Naive thymus-derived CD4-positive, alpha-beta T cell (primary cell): ENCODE measurements at regions of chr5 and their contacts with region 1.

Region 1: GRCh38 chr5:61331407-61332357 is at the start of gene ZSWIM6:
- DNase-seq: peak; percentile 96 to 99 (median 97)
- ATAC-seq: peak; percentile 90
- H3K4me3 ChIP-seq: peak within 1 kb of the TSS; percentile 86
- H3K4me3 Mint-ChIP-seq: peak within 1 kb of the TSS; percentile 87 to 98 (median 94)
- H3K27ac ChIP-seq: peak within 1 kb of the TSS; percentile 91
- H3K27ac Mint-ChIP-seq: peak within 1 kb of the TSS; percentile 81 to 98 (median 95)
- H3K4me1 ChIP-seq: peaks cover 15 to 29% of the 10 kb centered on the region in 2 donors
- H3K4me1 Mint-ChIP-seq: peaks cover 22 to 44% (median 31%) of the 10 kb centered on the region in 7 donors
- H3K27me3 ChIP-seq: no peaks in the 10 kb centered on the region
- H3K27me3 Mint-ChIP-seq: peaks cover 7 to 52% (median 19%) of the 10 kb centered on the region in 5 donors
- total RNA-seq, gene ZSWIM6: 4.2 to 18.5 (median 11.5) TPM

Region 2: GRCh38 chr5:61055434-61056006 is 276.2 kb before region 1 on chr5:
- CTCF ChIA-PET with region 1: no interaction called
- POLR2A ChIA-PET with region 1: no interaction called
- intact Hi-C with region 1: loop called in 1 of 2 experiments (anchors 1 kb)
- DNase-seq: peak in 5 of 9 donors; percentile 13 to 46 (median 30)
- ATAC-seq: peak; percentile 51
- H3K4me3 ChIP-seq: no peak overlapping the region
- H3K4me3 Mint-ChIP-seq: no peak overlapping the region
- H3K27ac ChIP-seq: no peak overlapping the region
- H3K27ac Mint-ChIP-seq: no peak overlapping the region
- H3K4me1 ChIP-seq: no peaks in the 10 kb centered on the region
- H3K4me1 Mint-ChIP-seq: peaks cover 0 to 3% (median 0%) of the 10 kb centered on the region in 7 donors
- H3K27me3 ChIP-seq: no peaks in the 10 kb centered on the region
- H3K27me3 Mint-ChIP-seq: no peaks in the 10 kb centered on the region

Region 3: GRCh38 chr5:61285531-61285930 is 46.2 kb before region 1 on chr5:
- CTCF ChIA-PET with region 1: no interaction called
- POLR2A ChIA-PET with region 1: interaction called, 5 read pairs
- intact Hi-C with region 1: loop called in 1 of 2 experiments (anchors 2 kb)
- DNase-seq: no peak
- ATAC-seq: no peak
- H3K4me3 ChIP-seq: no peak overlapping the region
- H3K4me3 Mint-ChIP-seq: no peak overlapping the region
- H3K27ac ChIP-seq: no peak overlapping the region
- H3K27ac Mint-ChIP-seq: peak overlapping the region in 1 of 9 donors; percentile 25
- H3K4me1 ChIP-seq: no peaks in the 10 kb centered on the region
- H3K4me1 Mint-ChIP-seq: peaks cover 0 to 8% (median 0%) of the 10 kb centered on the region in 7 donors
- H3K27me3 ChIP-seq: no peaks in the 10 kb centered on the region
- H3K27me3 Mint-ChIP-seq: no peaks in the 10 kb centered on the region

Region 4: DNA sequence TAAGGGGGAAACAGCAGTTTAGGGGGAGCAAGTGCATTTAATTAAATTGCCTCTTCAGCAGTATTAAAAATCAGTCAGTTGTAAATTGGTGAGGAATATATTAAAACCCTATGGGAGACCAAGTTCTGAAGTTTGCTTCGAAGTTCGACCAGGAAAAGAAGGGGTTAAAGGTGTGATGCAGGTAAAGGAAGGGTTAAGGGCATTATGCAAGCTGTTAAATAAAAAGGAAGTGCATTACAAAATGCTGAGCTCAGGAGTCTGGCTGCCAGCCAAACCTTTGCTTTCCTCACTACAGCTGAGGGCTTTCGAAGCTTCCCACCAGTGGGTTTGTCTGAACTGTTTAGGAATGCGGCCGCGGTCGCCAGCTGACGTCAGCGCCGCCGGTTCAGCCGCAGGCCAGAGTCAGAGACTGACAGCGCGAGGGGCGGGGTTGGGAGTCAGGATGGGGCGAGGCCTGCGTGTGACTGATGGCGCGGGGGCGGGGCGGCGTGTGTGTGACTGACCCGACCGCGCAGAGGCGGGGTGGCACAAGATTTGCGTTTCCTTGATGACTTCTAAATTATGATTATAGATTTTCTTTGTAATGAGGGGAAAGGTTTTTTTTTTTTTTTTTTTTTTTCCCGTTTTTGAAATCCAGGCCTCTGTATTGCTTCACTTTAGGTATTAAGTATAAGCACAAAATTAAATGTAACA is 76.9 kb after region 1 on chr5:
- CTCF ChIA-PET with region 1: no interaction called
- POLR2A ChIA-PET with region 1: interaction called, 27 read pairs
- intact Hi-C with region 1: loop called (anchors 1 kb)
- DNase-seq: peak; percentile 92 to 98 (median 95)
- ATAC-seq: peak; percentile 98
- H3K4me3 ChIP-seq: peak overlapping the region; percentile 36
- H3K4me3 Mint-ChIP-seq: peak overlapping the region; percentile 74 to 94 (median 84)
- H3K27ac ChIP-seq: peak overlapping the region; percentile 32
- H3K27ac Mint-ChIP-seq: peak overlapping the region; percentile 59 to 98 (median 91)
- H3K4me1 ChIP-seq: peaks cover 12 to 14% of the 10 kb centered on the region in 2 donors
- H3K4me1 Mint-ChIP-seq: peaks cover 22 to 38% (median 32%) of the 10 kb centered on the region in 7 donors
- H3K27me3 ChIP-seq: no peaks in the 10 kb centered on the region
- H3K27me3 Mint-ChIP-seq: peaks cover 0 to 15% (median 0%) of the 10 kb centered on the region in 5 donors

Region 5: GRCh38 chr5:62305715-62306322 is 974.1 kb after region 1 on chr5 and contains the start of gene KIF2A:
- CTCF ChIA-PET with region 1: no interaction called
- POLR2A ChIA-PET with region 1: no interaction called
- intact Hi-C with region 1: loop called (anchors 1 to 5 kb)
- DNase-seq: peak; percentile 87 to 96 (median 94)
- ATAC-seq: peak; percentile 94
- H3K4me3 ChIP-seq: peak within 1 kb of the TSS; percentile 79
- H3K4me3 Mint-ChIP-seq: peak within 1 kb of the TSS; percentile 93 to 100 (median 98)
- H3K27ac ChIP-seq: peak within 1 kb of the TSS; percentile 81
- H3K27ac Mint-ChIP-seq: peak within 1 kb of the TSS; percentile 92 to 100 (median 98)
- H3K4me1 ChIP-seq: peaks cover 32 to 38% of the 10 kb centered on the region in 2 donors
- H3K4me1 Mint-ChIP-seq: peaks cover 27 to 60% (median 48%) of the 10 kb centered on the region in 7 donors
- H3K27me3 ChIP-seq: no peaks in the 10 kb centered on the region
- H3K27me3 Mint-ChIP-seq: no peaks in the 10 kb centered on the region
- total RNA-seq, gene KIF2A: 73.5 to 179 (median 142) TPM

Region 6: GRCh38 chr5:62347928-62348327 is 1016.2 kb after region 1 on chr5:
- CTCF ChIA-PET with region 1: no interaction called
- POLR2A ChIA-PET with region 1: no interaction called
- intact Hi-C with region 1: no loop called
- DNase-seq: no peak
- ATAC-seq: no peak
- H3K4me3 ChIP-seq: no peak overlapping the region
- H3K4me3 Mint-ChIP-seq: no peak overlapping the region
- H3K27ac ChIP-seq: peak overlapping the region; percentile 43
- H3K27ac Mint-ChIP-seq: peak overlapping the region in 7 of 9 donors; percentile 49 to 90 (median 78)
- H3K4me1 ChIP-seq: peaks cover 0 to 9% of the 10 kb centered on the region in 2 donors
- H3K4me1 Mint-ChIP-seq: peaks cover 10 to 38% (median 29%) of the 10 kb centered on the region in 7 donors
- H3K27me3 ChIP-seq: no peaks in the 10 kb centered on the region
- H3K27me3 Mint-ChIP-seq: no peaks in the 10 kb centered on the region